A549 (cell line): ENCODE measurements at regions of chr3 and their contacts with region 1.

Region 1: GRCh38 chr3:136861890-136862616 is at the start of gene NCK1:
- DNase-seq: peak; percentile 92 to 96
- ATAC-seq: peak; percentile 99
- H3K4me3 ChIP-seq: peak within 1 kb of the TSS; percentile 77
- H3K27ac ChIP-seq: peak within 1 kb of the TSS; percentile 91 to 98
- H3K4me1 ChIP-seq: 0 out of 3 replicates have a peak, but pooled peaks cover 12% of the 10 kb centered on the region
- CTCF ChIP-seq: no peak
- EP300 ChIP-seq: no peak
- POLR2A ChIP-seq: peak; percentile 89
- RAD21 ChIP-seq: no peak
- polyA plus RNA-seq, gene NCK1: 47.9 and 60.8 TPM in 2 replicates

Region 2: GRCh38 chr3:136838641-136839555 is 23.2 kb before region 1 on chr3:
- CTCF ChIA-PET with region 1: no interaction called
- POLR2A ChIA-PET with region 1: interaction called, 15 read pairs
- DNase-seq: no peak
- ATAC-seq: peak; percentile 70 to 76; a peak in 5 of 6 replicates
- H3K4me3 ChIP-seq: no peak overlapping the region
- H3K27ac ChIP-seq: peak overlapping the region; percentile 31 to 74; a peak in 4 of 6 replicates
- H3K4me1 ChIP-seq: peaks cover 47% of the 10 kb centered on the region
- CTCF ChIP-seq: no peak
- EP300 ChIP-seq: no peak
- POLR2A ChIP-seq: no peak
- RAD21 ChIP-seq: no peak